ENCODE measurements at regions of chr1 and their contacts with region 1.

Region 1: DNA sequence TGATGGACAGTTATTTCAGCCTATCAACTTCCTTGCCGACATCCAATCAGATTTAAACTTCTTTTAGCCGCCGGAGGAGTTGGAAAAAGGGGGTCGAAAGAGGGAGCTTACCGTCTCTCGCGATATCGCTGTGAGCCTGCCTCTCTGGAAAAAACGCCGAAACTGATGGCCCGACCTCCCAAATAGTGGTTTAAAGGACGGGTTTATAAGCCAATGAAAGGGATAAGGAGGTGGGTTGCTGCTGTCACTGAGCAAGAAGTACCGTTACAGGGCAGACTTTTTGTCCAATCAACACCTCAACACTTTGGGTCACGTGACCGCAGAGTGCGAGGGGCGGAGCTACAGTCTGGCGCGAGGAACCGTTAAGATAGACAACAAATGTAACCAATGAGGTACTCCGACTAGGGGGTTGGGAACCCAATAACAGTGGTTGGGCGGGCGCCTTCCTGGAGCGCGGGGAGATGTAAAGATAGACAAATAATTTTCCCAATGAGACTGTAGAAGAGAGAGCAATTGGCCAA is at the start of gene RBM15:
- DNase-seq: peak; percentile 99
- H3K4me3 ChIP-seq: peak within 1 kb of the TSS; percentile 77 to 84
- H3K27ac ChIP-seq: peak within 1 kb of the TSS; percentile 97
- H3K4me1 ChIP-seq: peaks cover 14% of the 10 kb centered on the region
- H3K27me3 ChIP-seq: no peaks in the 10 kb centered on the region
- CTCF ChIP-seq: no peak
- POLR2A ChIP-seq: no peak
- total RNA-seq, gene RBM15: 18.7 to 42.6 TPM

Region 2: GRCh38 chr1:110390692-110391245 is 51.8 kb after region 1 on chr1 and contains the start of gene SLC16A4:
- intact Hi-C with region 1: loop called (anchors 5 kb)
- DNase-seq: no peak
- H3K4me3 ChIP-seq: peak within 1 kb of the TSS; percentile 2 to 8
- H3K27ac ChIP-seq: peak within 1 kb of the TSS; percentile 49 to 50
- H3K4me1 ChIP-seq: no peaks in the 10 kb centered on the region
- H3K27me3 ChIP-seq: no peaks in the 10 kb centered on the region
- CTCF ChIP-seq: no peak
- POLR2A ChIP-seq: peak; percentile 31
- total RNA-seq, gene SLC16A4: 1.7 to 9.0 TPM

Region 3: DNA sequence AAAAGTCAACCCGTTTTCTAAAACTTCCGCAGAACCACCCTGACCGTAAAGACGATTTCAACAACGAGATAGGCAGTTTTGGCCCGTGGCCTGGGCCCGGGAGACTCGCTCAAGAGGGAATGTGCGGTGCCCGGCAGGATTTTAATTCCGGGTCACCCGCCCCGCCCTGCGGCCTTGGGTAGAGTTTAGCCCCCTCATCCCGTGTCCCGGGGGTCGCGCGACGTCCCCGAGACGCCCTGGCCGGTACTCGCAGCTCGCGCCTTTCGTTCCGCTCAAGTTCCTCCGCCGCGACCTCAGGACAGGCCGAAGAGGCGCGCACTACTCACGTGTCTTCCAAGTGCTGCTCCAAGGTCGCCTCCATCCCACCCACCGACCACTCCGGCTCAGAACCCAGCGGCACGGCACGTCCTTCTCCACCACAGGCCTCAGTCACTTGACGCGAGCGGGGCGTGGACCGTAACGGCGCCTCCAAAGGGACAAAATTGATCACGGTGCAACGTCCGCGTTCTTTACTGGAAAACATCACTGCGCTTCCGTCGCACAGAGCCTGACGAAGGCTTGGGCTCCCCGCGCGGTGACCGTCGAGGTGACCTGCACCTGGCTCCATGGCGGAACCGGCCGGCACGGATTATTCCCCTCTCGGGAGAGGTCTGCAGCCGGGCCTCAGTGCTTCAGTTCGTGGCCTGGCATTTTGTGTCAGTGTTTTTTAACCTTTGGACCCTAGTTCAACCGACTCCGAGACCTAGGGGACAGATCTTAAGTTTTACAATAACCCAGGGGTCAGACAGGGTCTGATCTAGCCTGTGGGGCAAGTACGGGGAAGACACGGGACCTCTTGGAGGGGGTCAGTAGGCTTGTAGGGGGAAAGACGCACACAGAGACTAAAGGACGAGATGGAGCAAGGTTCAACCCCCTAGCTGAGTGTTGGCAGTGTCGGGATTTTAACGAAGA is 68.6 kb after region 1 on chr1 and contains the start of gene LAMTOR5:
- intact Hi-C with region 1: loop called (anchors 5 kb)
- DNase-seq: peak; percentile 91
- H3K4me3 ChIP-seq: peak within 1 kb of the TSS; percentile 81 to 93
- H3K27ac ChIP-seq: peak within 1 kb of the TSS; percentile 90 to 92
- H3K4me1 ChIP-seq: peaks cover 7% of the 10 kb centered on the region
- H3K27me3 ChIP-seq: no peaks in the 10 kb centered on the region
- CTCF ChIP-seq: peak in 2 of 4 experiments; percentile 20 to 39
- POLR2A ChIP-seq: peak; percentile 82
- total RNA-seq, gene LAMTOR5: 86.6 to 132 TPM